ENCODE measurements at regions of chr14 and their contacts with region 1.

Region 1: GRCh38 chr14:24710403-24711112 is 76.6 kb upstream of the GZMB start:
- DNase-seq: peak; percentile 29 to 77 (median 52)
- ATAC-seq: peak; percentile 55
- H3K4me3 ChIP-seq: no peak overlapping the region
- H3K4me3 Mint-ChIP-seq: no peak overlapping the region
- H3K27ac ChIP-seq: no peak overlapping the region
- H3K27ac Mint-ChIP-seq: no peak overlapping the region
- H3K4me1 ChIP-seq: no peaks in the 10 kb centered on the region
- H3K4me1 Mint-ChIP-seq: no peaks in the 10 kb centered on the region
- H3K27me3 ChIP-seq: no peaks in the 10 kb centered on the region
- H3K27me3 Mint-ChIP-seq: peaks cover 2% of the 10 kb centered on the region
- CTCF ChIP-seq: peak; percentile 88

Region 2: GRCh38 chr14:24639905-24640304 is 70.7 kb before region 1 on chr14:
- CTCF ChIA-PET with region 1: no interaction called
- POLR2A ChIA-PET with region 1: no interaction called
- intact Hi-C with region 1: no loop called
- DNase-seq: no peak
- ATAC-seq: no peak
- H3K4me3 ChIP-seq: no peak overlapping the region
- H3K4me3 Mint-ChIP-seq: no peak overlapping the region
- H3K27ac ChIP-seq: no peak overlapping the region
- H3K27ac Mint-ChIP-seq: no peak overlapping the region
- H3K4me1 ChIP-seq: no peaks in the 10 kb centered on the region
- H3K4me1 Mint-ChIP-seq: peaks cover 2% of the 10 kb centered on the region
- H3K27me3 ChIP-seq: no peaks in the 10 kb centered on the region
- H3K27me3 Mint-ChIP-seq: peaks cover under 1% of the 10 kb centered on the region
- CTCF ChIP-seq: no peak

Region 3: DNA sequence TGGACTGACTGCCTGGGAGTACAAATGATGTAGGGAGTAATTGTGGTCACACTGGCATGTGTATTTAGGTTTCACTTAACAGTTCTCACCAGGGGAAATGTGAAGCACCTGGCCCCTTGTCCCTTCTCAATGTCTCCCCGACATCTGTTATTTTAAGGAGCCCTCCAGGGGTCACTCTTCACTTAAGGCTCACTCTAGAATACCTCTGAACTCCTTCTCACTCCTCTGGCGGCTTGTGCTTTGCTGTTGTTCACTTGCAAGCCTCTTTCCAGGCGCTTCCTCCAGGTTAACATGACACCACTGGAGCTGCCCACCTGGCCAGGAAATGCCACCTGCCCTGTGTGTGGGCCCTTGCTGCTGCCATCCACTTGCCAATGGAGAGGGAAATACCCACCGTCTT is 20.1 kb before region 1 on chr14:
- CTCF ChIA-PET with region 1: interaction called, 17 read pairs
- POLR2A ChIA-PET with region 1: interaction called, 3 read pairs
- intact Hi-C with region 1: no loop called
- DNase-seq: peak in 2 of 9 experiments; percentile 51 to 66
- ATAC-seq: no peak
- H3K4me3 ChIP-seq: no peak overlapping the region
- H3K4me3 Mint-ChIP-seq: no peak overlapping the region
- H3K27ac ChIP-seq: peak overlapping the region in 1 of 2 experiments; percentile 1
- H3K27ac Mint-ChIP-seq: no peak overlapping the region
- H3K4me1 ChIP-seq: peaks cover 44% of the 10 kb centered on the region
- H3K4me1 Mint-ChIP-seq: peaks cover 24% of the 10 kb centered on the region
- H3K27me3 ChIP-seq: no peaks in the 10 kb centered on the region
- H3K27me3 Mint-ChIP-seq: no peaks in the 10 kb centered on the region
- CTCF ChIP-seq: no peak

Region 4: DNA sequence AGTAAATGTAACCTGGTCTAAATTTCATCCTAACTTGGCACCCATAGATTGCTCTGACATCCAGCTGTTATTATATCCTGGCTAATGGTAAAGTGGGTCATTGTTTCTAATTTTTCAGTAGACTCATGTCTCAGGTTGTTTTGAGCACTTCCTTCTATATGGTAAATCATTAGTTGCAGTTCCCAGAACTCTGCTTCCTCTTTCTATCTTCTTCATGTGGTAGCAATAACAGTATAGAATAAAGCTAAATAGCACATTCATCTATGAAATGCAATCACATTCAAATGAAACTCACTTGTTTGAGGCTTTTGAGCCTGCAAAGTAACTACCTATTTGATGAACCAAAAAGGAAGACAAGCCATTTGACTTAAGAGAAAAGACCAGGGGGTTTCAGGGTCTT is 11.5 kb before region 1 on chr14:
- CTCF ChIA-PET with region 1: interaction called, 17 read pairs
- POLR2A ChIA-PET with region 1: interaction called, 3 read pairs
- intact Hi-C with region 1: no loop called
- DNase-seq: no peak
- ATAC-seq: no peak
- H3K4me3 ChIP-seq: no peak overlapping the region
- H3K4me3 Mint-ChIP-seq: no peak overlapping the region
- H3K27ac ChIP-seq: no peak overlapping the region
- H3K27ac Mint-ChIP-seq: no peak overlapping the region
- H3K4me1 ChIP-seq: peaks cover 25% of the 10 kb centered on the region
- H3K4me1 Mint-ChIP-seq: peaks cover 11% of the 10 kb centered on the region
- H3K27me3 ChIP-seq: no peaks in the 10 kb centered on the region
- H3K27me3 Mint-ChIP-seq: no peaks in the 10 kb centered on the region
- CTCF ChIP-seq: no peak

Region 5: DNA sequence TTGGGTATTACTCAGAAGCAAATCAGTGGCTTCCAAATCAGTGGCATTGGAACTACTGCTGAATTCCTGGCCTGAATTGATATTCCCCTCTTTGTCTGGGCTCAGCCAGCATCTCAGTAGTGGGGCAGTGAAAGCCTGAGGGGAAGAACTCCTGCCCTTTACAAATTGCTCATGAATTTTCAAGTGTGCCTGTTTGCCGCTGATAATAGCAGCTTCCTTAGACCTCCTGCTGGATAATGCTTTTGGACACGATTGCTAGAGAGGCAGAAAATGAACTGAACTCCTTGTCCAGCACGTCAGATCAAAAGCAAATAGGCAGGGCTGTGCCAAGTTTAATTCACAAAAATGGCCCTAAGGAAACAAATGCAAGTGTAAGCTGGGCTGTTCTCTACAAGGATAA is 14.8 kb after region 1 on chr14:
- CTCF ChIA-PET with region 1: interaction called, 18 read pairs
- POLR2A ChIA-PET with region 1: interaction called, 4 read pairs
- intact Hi-C with region 1: no loop called
- DNase-seq: no peak
- ATAC-seq: no peak
- H3K4me3 ChIP-seq: no peak overlapping the region
- H3K4me3 Mint-ChIP-seq: no peak overlapping the region
- H3K27ac ChIP-seq: no peak overlapping the region
- H3K27ac Mint-ChIP-seq: no peak overlapping the region
- H3K4me1 ChIP-seq: no peaks in the 10 kb centered on the region
- H3K4me1 Mint-ChIP-seq: no peaks in the 10 kb centered on the region
- H3K27me3 ChIP-seq: no peaks in the 10 kb centered on the region
- H3K27me3 Mint-ChIP-seq: peaks cover 33% of the 10 kb centered on the region
- CTCF ChIP-seq: no peak

Region 6: DNA sequence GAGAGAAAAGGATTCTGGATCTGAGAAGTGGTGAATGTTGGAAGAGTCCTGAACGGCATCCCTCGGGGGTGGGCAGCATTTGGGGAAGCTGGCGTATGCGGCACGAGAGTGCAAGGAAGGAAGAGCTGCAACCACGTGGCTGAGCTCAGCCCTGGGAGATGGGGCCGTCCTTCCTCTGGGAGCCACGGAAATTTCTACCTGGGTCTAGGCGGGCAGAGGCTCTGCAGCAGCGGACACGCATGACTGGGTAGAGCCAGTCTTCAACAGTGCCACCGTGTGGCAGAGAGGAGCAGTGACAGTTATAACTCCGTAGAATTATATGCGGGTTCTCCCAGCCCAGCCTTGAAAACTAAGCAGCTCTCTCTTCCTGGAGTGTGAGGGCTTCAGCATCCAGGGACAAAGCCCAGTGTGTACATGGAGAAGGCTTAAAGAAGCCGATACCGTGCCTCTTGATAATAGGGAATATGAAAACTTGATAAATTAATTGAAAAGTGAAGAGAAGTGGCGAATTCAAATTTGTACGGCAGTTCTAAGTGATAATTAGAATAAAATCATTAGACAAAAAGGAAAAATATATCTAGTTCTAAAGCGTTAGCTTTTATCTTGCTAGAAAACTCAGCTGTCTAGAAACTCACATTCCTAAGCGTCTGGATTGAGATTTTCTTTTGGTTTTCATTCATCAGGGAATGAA is 422.3 kb after region 1 on chr14:
- CTCF ChIA-PET with region 1: interaction called, 38 read pairs
- POLR2A ChIA-PET with region 1: no interaction called
- intact Hi-C with region 1: loop called in 1 of 2 experiments (anchors 2 kb)
- DNase-seq: peak; percentile 4 to 74 (median 29)
- ATAC-seq: peak; percentile 71
- H3K4me3 ChIP-seq: no peak overlapping the region
- H3K4me3 Mint-ChIP-seq: no peak overlapping the region
- H3K27ac ChIP-seq: no peak overlapping the region
- H3K27ac Mint-ChIP-seq: no peak overlapping the region
- H3K4me1 ChIP-seq: no peaks in the 10 kb centered on the region
- H3K4me1 Mint-ChIP-seq: no peaks in the 10 kb centered on the region
- H3K27me3 ChIP-seq: peaks cover 0 to 7% of the 10 kb centered on the region in 2 experiments
- H3K27me3 Mint-ChIP-seq: peaks cover 41% of the 10 kb centered on the region
- CTCF ChIP-seq: peak; percentile 60

Region 7: DNA sequence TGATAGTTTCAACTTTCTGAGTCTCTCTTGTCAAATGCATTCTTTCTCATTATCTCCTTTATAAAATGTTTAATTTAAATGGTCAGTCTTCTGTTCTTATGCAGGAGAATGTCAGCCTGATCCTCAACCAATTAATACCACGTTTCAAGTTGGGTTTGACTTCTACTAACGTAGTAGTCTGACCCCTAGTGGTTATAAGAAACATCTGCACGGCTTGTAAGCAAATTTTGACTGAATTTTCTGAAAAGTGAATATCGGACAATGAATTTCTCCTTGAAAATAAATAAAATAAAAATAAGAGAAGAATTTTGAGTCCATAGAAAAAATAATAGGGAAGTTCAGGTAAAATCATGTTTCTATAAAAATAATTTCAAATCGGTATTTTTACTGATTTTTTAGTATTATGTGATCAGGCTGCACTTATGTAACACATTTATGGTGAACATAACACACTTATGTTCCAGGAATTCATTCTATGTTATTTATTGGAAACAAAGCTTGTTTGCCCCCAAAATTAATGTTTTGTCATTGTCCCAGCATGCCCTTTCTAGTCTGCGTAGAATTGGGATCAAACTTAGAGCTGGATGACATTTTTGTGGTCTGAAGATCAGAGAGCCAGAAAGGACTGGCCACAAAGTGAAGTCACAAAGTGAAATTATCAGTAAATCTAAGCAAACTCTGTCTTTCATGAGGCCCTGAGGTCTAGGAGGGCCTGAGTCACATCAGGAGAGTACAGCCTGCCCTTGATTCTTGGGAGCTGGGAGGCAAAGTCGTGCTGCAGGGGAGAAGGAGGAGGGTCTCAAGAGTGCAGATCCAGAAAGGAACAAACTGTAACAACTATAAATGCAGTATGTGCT is 440.6 kb after region 1 on chr14:
- CTCF ChIA-PET with region 1: no interaction called
- POLR2A ChIA-PET with region 1: no interaction called
- intact Hi-C with region 1: loop called (anchors 1 to 5 kb)
- DNase-seq: peak in 2 of 9 experiments; percentile 30 to 54
- ATAC-seq: no peak
- H3K4me3 ChIP-seq: no peak overlapping the region
- H3K4me3 Mint-ChIP-seq: no peak overlapping the region
- H3K27ac ChIP-seq: no peak overlapping the region
- H3K27ac Mint-ChIP-seq: no peak overlapping the region
- H3K4me1 ChIP-seq: no peaks in the 10 kb centered on the region
- H3K4me1 Mint-ChIP-seq: no peaks in the 10 kb centered on the region
- H3K27me3 ChIP-seq: no peaks in the 10 kb centered on the region
- H3K27me3 Mint-ChIP-seq: peaks cover 15% of the 10 kb centered on the region
- CTCF ChIP-seq: peak; percentile 89